ENCODE measurements at regions of chr18 and their contacts with region 1.

Region 1: DNA sequence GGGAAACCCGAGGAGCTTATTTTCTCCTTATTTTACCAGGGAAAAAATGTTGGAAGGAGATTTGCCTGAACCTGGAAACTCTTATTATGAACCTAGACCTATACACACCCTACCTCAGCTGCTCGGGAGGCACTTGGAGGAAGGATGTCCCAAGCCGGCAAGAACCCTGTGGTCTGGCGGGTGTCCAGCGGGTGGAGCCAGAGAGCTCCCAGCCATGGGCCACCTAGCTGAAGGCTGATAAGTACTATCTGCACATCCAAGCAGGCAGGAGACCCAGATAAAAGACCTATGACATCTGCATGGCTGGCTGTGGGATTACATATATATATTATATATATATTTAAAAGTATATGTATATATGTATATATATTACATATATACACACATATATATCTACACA is 1.1 kb upstream of the SLC14A1 start:
- DNase-seq: peak; percentile 73
- H3K4me3 ChIP-seq: no peak overlapping the region
- H3K27ac ChIP-seq: no peak overlapping the region
- H3K4me1 ChIP-seq: no peaks in the 10 kb centered on the region
- H3K27me3 ChIP-seq: peaks cover 27% of the 10 kb centered on the region
- CTCF ChIP-seq: peak; percentile 73

Region 2: GRCh38 chr18:45839414-45840395 is 116.8 kb after region 1 on chr18:
- CTCF ChIA-PET with region 1: interaction called, 3 read pairs
- POLR2A ChIA-PET with region 1: no interaction called
- intact Hi-C with region 1: loop called (anchors 2 kb)
- DNase-seq: peak; percentile 68
- H3K4me3 ChIP-seq: no peak overlapping the region
- H3K27ac ChIP-seq: no peak overlapping the region
- H3K4me1 ChIP-seq: no peaks in the 10 kb centered on the region
- H3K27me3 ChIP-seq: peaks cover 56% of the 10 kb centered on the region
- CTCF ChIP-seq: peak; percentile 64

Region 3: DNA sequence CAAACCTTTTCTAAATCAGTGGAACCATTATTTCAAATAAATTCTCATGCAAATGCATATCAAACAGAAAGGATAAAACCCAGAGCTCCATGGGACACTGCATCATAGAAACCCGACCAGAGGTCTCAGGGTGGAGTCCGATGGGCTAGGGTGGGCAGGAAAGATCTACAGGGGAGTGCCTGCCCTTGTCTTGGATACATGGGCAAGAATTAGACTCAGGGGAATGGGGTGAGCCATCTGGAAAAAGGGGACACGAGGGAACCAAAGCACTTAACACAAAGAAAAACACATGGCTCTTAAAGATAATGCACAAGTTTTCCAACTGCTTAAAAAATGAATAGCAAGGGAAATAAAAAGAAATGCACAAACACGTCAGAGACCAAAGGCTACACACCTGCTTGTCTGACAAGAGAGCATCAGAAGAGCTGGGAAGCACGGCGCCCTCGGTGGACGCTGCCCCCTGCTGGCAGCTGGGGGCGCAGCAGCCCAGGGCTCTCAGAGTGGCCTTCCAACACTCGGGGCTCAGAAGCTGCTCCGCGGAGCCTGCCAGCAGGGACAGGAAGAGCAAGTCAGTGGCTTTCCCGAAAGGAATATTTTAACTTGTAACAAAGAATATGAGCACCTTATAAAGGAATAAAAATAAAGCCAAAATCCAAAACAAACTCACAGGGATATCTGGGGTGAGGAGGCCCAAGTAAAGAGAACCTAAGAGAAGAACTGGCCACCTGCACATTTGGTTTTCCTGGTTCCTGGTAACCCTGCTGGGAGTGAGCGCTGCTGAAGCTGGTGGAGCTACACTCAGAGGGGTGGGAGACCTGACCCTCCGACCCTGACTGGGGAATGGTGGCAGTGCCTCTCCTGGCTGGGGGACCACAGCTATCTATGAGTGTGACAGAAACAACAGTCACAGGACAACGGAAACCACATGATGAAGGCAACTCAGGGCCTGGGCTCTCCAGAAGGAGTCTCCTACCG is 157.1 kb after region 1 on chr18:
- CTCF ChIA-PET with region 1: interaction called, 3 read pairs
- POLR2A ChIA-PET with region 1: no interaction called
- intact Hi-C with region 1: loop called (anchors 2 kb)
- DNase-seq: peak; percentile 70
- H3K4me3 ChIP-seq: no peak overlapping the region
- H3K27ac ChIP-seq: no peak overlapping the region
- H3K4me1 ChIP-seq: no peaks in the 10 kb centered on the region
- H3K27me3 ChIP-seq: no peaks in the 10 kb centered on the region
- CTCF ChIP-seq: peak; percentile 99

Region 4: DNA sequence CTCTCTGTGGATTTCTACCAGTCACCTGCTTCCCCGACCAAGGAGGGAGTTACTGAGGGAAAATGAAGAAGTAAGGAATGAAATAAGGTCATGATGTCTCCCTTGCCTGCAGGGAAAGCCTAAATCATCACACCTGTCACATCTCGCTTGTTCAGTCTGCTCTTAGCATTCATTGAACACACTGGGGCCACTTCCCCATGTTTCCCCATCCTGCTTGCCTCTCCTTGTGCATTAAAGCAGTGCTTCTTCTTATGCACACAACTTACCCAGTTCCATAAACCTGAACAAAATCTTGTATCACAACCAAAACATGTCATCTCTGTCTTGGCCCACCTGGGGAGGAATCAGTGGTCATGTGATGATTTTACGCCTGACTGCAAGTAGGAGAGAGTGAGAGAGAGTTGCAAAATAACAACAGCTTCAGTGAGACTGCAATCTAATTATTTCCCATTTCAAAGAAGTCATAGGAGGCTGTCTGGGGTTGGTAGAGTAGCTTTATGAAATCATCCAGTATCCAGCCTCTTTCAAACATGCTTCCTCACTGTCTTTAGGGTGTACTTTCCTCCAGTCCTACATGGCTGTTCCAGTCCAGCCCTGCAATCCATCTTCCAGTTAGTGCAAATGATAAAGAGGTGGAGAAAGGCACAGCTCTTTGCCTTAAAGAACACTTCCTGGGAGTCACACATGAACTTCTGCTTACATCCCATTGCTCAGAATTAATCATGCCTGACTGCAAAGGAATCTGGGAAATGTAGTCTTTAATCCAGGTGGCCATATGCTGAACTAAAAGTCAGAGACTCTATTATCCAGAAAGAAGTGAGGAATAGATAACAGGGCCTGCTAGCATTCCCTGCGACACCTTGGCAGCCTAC is 601.4 kb after region 1 on chr18:
- CTCF ChIA-PET with region 1: no interaction called
- POLR2A ChIA-PET with region 1: no interaction called
- intact Hi-C with region 1: no loop called
- DNase-seq: peak; percentile 64
- H3K4me3 ChIP-seq: no peak overlapping the region
- H3K27ac ChIP-seq: no peak overlapping the region
- H3K4me1 ChIP-seq: peaks cover 18% of the 10 kb centered on the region
- H3K27me3 ChIP-seq: no peaks in the 10 kb centered on the region
- CTCF ChIP-seq: no peak

Measured in A673 (cell line).